Activated CD4-positive, alpha-beta memory T cell treated with anti-CD3 and anti-CD28 coated beads for 36 hours (primary cell): ENCODE measurements at regions of chr2 and their contacts with region 1.

Region 1: GRCh38 chr2:6917071-6917760 is at the start of gene RNF144A:
- DNase-seq: peak; percentile 78
- H3K4me3 Mint-ChIP-seq: peak within 1 kb of the TSS; percentile 69
- H3K27ac Mint-ChIP-seq: peak within 1 kb of the TSS; percentile 67
- H3K4me1 Mint-ChIP-seq: peaks cover 66% of the 10 kb centered on the region
- H3K27me3 Mint-ChIP-seq: no peaks in the 10 kb centered on the region
- total RNA-seq, gene RNF144A: 21.4 to 22.7 TPM

Region 2: GRCh38 chr2:6865346-6866274 is 51.6 kb before region 1 on chr2 and contains the start of gene CMPK2:
- CTCF ChIA-PET with region 1: interaction called, 5 read pairs
- POLR2A ChIA-PET with region 1: no interaction called
- intact Hi-C with region 1: loop called (anchors 1 kb)
- DNase-seq: peak; percentile 84
- H3K4me3 Mint-ChIP-seq: peak within 1 kb of the TSS; percentile 92
- H3K27ac Mint-ChIP-seq: peak within 1 kb of the TSS; percentile 85
- H3K4me1 Mint-ChIP-seq: peaks cover 7% of the 10 kb centered on the region
- H3K27me3 Mint-ChIP-seq: peaks cover 2% of the 10 kb centered on the region
- total RNA-seq, gene CMPK2: 6.6 to 6.8 TPM

Region 3: GRCh38 chr2:6896930-6897759 is 20.1 kb before region 1 on chr2:
- CTCF ChIA-PET with region 1: interaction called, 26 read pairs
- POLR2A ChIA-PET with region 1: interaction called, 3 read pairs
- intact Hi-C with region 1: loop called (anchors 2 kb)
- DNase-seq: no peak
- H3K4me3 Mint-ChIP-seq: no peak overlapping the region
- H3K27ac Mint-ChIP-seq: no peak overlapping the region
- H3K4me1 Mint-ChIP-seq: peaks cover 11% of the 10 kb centered on the region
- H3K27me3 Mint-ChIP-seq: no peaks in the 10 kb centered on the region

Region 4: GRCh38 chr2:6946722-6947121 is 29.5 kb after region 1 on chr2:
- CTCF ChIA-PET with region 1: interaction called, 5 read pairs
- POLR2A ChIA-PET with region 1: no interaction called
- intact Hi-C with region 1: loop called (anchors 1 kb)
- DNase-seq: no peak
- H3K4me3 Mint-ChIP-seq: no peak overlapping the region
- H3K27ac Mint-ChIP-seq: no peak overlapping the region
- H3K4me1 Mint-ChIP-seq: peaks cover 43% of the 10 kb centered on the region
- H3K27me3 Mint-ChIP-seq: no peaks in the 10 kb centered on the region

Region 5: GRCh38 chr2:7044261-7045250 is 127.3 kb after region 1 on chr2:
- CTCF ChIA-PET with region 1: interaction called, 15 read pairs
- POLR2A ChIA-PET with region 1: no interaction called
- intact Hi-C with region 1: no loop called
- DNase-seq: peak; percentile 71
- H3K4me3 Mint-ChIP-seq: no peak overlapping the region
- H3K27ac Mint-ChIP-seq: no peak overlapping the region
- H3K4me1 Mint-ChIP-seq: peaks cover 2% of the 10 kb centered on the region
- H3K27me3 Mint-ChIP-seq: no peaks in the 10 kb centered on the region

Region 6: DNA sequence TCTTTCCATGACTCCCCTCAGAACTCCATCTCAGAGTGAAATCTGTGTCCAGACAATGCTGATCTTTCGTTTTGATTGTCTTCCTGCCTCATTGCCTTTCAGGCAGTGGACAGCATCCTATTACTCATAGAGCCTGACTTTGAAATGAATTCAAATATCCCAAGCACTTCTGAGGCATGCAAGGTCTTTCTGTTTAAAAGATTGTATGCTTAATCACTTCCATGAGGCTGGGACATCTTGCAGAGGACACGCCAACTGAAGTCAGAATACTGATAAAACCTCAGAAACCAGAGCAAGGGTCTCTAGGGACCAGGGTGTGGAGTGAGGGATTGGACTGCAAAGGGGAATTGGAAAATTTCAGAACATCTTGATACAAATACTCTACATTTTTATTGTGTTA is 928.1 kb after region 1 on chr2:
- CTCF ChIA-PET with region 1: no interaction called
- POLR2A ChIA-PET with region 1: no interaction called
- intact Hi-C with region 1: loop called (anchors 10 kb)
- DNase-seq: no peak
- H3K4me3 Mint-ChIP-seq: no peak overlapping the region
- H3K27ac Mint-ChIP-seq: no peak overlapping the region
- H3K4me1 Mint-ChIP-seq: peaks cover 36% of the 10 kb centered on the region
- H3K27me3 Mint-ChIP-seq: peaks cover 7% of the 10 kb centered on the region